Breast epithelium (tissue), 4 donors: ENCODE measurements at regions of chr4 and their contacts with region 1.

Region 1: GRCh38 chr4:175875993-175876771 is 64.1 kb upstream of the GPM6A start:
- DNase-seq: no peak
- H3K4me3 ChIP-seq: no peak overlapping the region
- H3K27ac ChIP-seq: no peak overlapping the region
- H3K4me1 ChIP-seq: no peaks in the 10 kb centered on the region
- H3K27me3 ChIP-seq: no peaks in the 10 kb centered on the region
- CTCF ChIP-seq: no peak
- POLR2A ChIP-seq: no peak

Region 2: GRCh38 chr4:175891851-175892250 is 15.7 kb after region 1 on chr4:
- intact Hi-C with region 1: loop called (anchors 1 kb)
- DNase-seq: no peak
- H3K4me3 ChIP-seq: no peak overlapping the region
- H3K27ac ChIP-seq: no peak overlapping the region
- H3K4me1 ChIP-seq: no peaks in the 10 kb centered on the region
- H3K27me3 ChIP-seq: no peaks in the 10 kb centered on the region
- CTCF ChIP-seq: peak in 1 of 3 donors; percentile 13
- POLR2A ChIP-seq: no peak

Region 3: GRCh38 chr4:175916626-175917351 is 40.6 kb after region 1 on chr4:
- intact Hi-C with region 1: no loop called
- DNase-seq: no peak
- H3K4me3 ChIP-seq: no peak overlapping the region
- H3K27ac ChIP-seq: no peak overlapping the region
- H3K4me1 ChIP-seq: no peaks in the 10 kb centered on the region
- H3K27me3 ChIP-seq: no peaks in the 10 kb centered on the region
- CTCF ChIP-seq: no peak
- POLR2A ChIP-seq: no peak